Kidney (tissue), 22 donors: ENCODE measurements at regions of chr16 and their contacts with region 1.

Region 1: GRCh38 chr16:11407047-11407982 is 62.1 kb downstream of the RMI2 start:
- DNase-seq: peak; percentile 28 to 77 (median 73)
- H3K4me3 ChIP-seq: no peak overlapping the region
- H3K27ac ChIP-seq: no peak overlapping the region
- H3K4me1 ChIP-seq: no peaks in the 10 kb centered on the region
- H3K27me3 ChIP-seq: no peaks in the 10 kb centered on the region
- CTCF ChIP-seq: peak; percentile 83

Region 2: GRCh38 chr16:11255737-11256660 is 151.3 kb before region 1 on chr16 and contains the start of gene SOCS1:
- intact Hi-C with region 1: no loop called
- DNase-seq: peak; percentile 90 to 96 (median 94)
- H3K4me3 ChIP-seq: peak within 1 kb of the TSS; percentile 63 to 85 (median 64)
- H3K27ac ChIP-seq: peak within 1 kb of the TSS; percentile 98 to 99
- H3K4me1 ChIP-seq: peaks cover 0 to 30% (median 15%) of the 10 kb centered on the region in 3 donors
- H3K27me3 ChIP-seq: no peaks in the 10 kb centered on the region
- CTCF ChIP-seq: peak; percentile 87
- total RNA-seq, gene SOCS1: 21.8 TPM

Region 3: GRCh38 chr16:11526655-11527350 is 119.5 kb after region 1 on chr16:
- intact Hi-C with region 1: loop called (anchors 10 kb)
- DNase-seq: peak in 3 of 5 donors; percentile 18 to 38 (median 37)
- H3K4me3 ChIP-seq: no peak overlapping the region
- H3K27ac ChIP-seq: no peak overlapping the region
- H3K4me1 ChIP-seq: no peaks in the 10 kb centered on the region
- H3K27me3 ChIP-seq: no peaks in the 10 kb centered on the region
- CTCF ChIP-seq: no peak

Region 4: GRCh38 chr16:11597239-11598101 is 190.2 kb after region 1 on chr16:
- intact Hi-C with region 1: no loop called
- DNase-seq: peak in 4 of 5 donors; percentile 64 to 88 (median 80)
- H3K4me3 ChIP-seq: no peak overlapping the region
- H3K27ac ChIP-seq: peak overlapping the region; percentile 82 to 86
- H3K4me1 ChIP-seq: peaks cover 0 to 9% (median 8%) of the 10 kb centered on the region in 3 donors
- H3K27me3 ChIP-seq: no peaks in the 10 kb centered on the region
- CTCF ChIP-seq: no peak

Region 5: DNA sequence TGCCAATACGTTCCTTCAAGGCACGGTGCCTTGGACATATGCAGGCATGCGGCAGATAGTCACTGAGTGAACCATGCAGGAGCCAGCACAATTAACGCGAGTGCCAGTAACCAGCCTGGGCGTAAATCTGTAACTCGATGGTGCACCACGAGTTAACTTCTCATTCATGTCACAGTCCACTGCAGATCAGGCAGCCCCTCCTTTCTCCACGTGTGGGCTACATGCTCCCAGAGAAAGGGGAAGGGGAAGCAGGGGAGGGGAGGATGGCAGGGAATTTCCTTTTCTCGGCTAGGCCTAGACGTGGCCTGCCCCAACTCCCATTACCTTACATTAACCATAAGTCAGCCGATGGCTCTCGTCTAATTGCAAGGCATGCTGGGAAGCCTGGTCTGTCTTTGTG is 1108.4 kb after region 1 on chr16:
- intact Hi-C with region 1: no loop called
- DNase-seq: peak in 4 of 5 donors; percentile 81 to 89 (median 86)
- H3K4me3 ChIP-seq: no peak overlapping the region
- H3K27ac ChIP-seq: peak overlapping the region in 1 of 2 donors; percentile 27
- H3K4me1 ChIP-seq: peaks cover 0 to 33% (median 27%) of the 10 kb centered on the region in 3 donors
- H3K27me3 ChIP-seq: no peaks in the 10 kb centered on the region
- CTCF ChIP-seq: no peak